Mammary epithelial cell (primary cell): ENCODE measurements at regions of chr5 and their contacts with region 1.

Region 1: GRCh38 chr5:55691265-55692105 is 20.6 kb downstream of the SLC38A9 start:
- DNase-seq: peak; percentile 31
- H3K4me3 ChIP-seq: no peak overlapping the region
- H3K27ac ChIP-seq: no peak overlapping the region
- H3K4me1 ChIP-seq: no peaks in the 10 kb centered on the region
- H3K27me3 ChIP-seq: no peaks in the 10 kb centered on the region
- CTCF ChIP-seq: peak; percentile 55 to 62

Region 2: GRCh38 chr5:55187370-55187769 is 504.1 kb before region 1 on chr5:
- CTCF ChIA-PET with region 1: no interaction called
- dilution Hi-C with region 1: no loop called
- in situ Hi-C with region 1: loop called (anchors 25 kb)
- intact Hi-C with region 1: loop called (anchors 5 kb)
- DNase-seq: peak; percentile 42
- H3K4me3 ChIP-seq: no peak overlapping the region
- H3K27ac ChIP-seq: no peak overlapping the region
- H3K4me1 ChIP-seq: no peaks in the 10 kb centered on the region
- H3K27me3 ChIP-seq: peaks cover 4% of the 10 kb centered on the region
- CTCF ChIP-seq: peak; percentile 42 to 53

Region 3: DNA sequence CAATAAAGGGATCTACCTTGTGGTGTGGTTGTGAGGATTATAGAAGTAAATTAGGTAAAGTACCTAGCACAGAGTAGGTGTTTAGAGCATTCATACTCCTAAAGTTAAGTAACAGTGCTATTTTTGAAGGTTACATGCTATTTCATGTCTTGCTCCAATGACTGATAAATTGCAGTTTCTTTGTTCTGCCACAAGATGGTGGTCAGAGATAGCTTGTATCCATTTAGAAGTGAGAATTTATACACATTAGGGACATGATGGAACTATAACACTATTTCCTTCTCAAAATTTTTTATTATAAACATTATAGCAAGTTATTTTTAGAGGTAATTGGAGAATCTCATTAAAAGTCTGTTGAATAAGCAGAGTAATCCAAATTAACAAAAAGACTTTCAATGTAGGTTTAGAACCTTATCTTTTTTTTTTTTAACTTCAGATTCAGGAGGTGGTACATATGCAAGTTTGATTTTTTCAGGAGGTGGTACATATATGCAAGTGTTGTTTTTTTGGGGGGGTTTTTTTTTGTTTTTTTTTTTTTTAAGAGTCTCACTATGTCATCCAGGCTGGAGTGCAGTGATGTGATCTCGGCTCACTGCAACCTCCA is 366.6 kb before region 1 on chr5:
- CTCF ChIA-PET with region 1: no interaction called
- dilution Hi-C with region 1: no loop called
- in situ Hi-C with region 1: no loop called
- intact Hi-C with region 1: loop called (anchors 5 kb)
- DNase-seq: peak; percentile 26
- H3K4me3 ChIP-seq: no peak overlapping the region
- H3K27ac ChIP-seq: no peak overlapping the region
- H3K4me1 ChIP-seq: no peaks in the 10 kb centered on the region
- H3K27me3 ChIP-seq: no peaks in the 10 kb centered on the region
- CTCF ChIP-seq: peak; percentile 56 to 66

Region 4: GRCh38 chr5:55407059-55407684 is 284.3 kb before region 1 on chr5:
- CTCF ChIA-PET with region 1: no interaction called
- dilution Hi-C with region 1: no loop called
- in situ Hi-C with region 1: loop called (anchors 25 kb)
- intact Hi-C with region 1: loop called (anchors 1 kb)
- DNase-seq: peak; percentile 23
- H3K4me3 ChIP-seq: no peak overlapping the region
- H3K27ac ChIP-seq: no peak overlapping the region
- H3K4me1 ChIP-seq: no peaks in the 10 kb centered on the region
- H3K27me3 ChIP-seq: no peaks in the 10 kb centered on the region
- CTCF ChIP-seq: peak; percentile 68 to 76

Region 5: DNA sequence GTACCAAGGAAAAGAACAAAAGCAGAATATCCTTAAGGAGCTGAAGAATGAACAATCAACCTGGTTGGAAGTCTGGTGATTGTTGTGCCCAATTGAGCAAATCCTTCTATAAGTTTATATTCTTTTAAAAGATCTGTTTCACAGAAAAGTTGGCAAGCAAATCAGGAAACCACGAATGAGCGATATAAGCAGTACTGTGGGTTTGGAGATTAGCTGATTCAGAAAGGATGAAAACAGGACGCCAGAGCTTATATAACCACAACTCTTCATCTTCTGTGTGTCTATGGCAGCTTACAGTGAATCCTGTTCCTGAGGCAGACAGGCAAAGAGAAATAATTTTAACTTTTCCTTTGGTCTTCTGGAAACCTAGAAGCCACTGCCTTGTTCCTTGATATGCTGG is 41.1 kb before region 1 on chr5:
- CTCF ChIA-PET with region 1: no interaction called
- dilution Hi-C with region 1: no loop called
- in situ Hi-C with region 1: no loop called
- intact Hi-C with region 1: no loop called
- DNase-seq: peak; percentile 42
- H3K4me3 ChIP-seq: no peak overlapping the region
- H3K27ac ChIP-seq: no peak overlapping the region
- H3K4me1 ChIP-seq: no peaks in the 10 kb centered on the region
- H3K27me3 ChIP-seq: no peaks in the 10 kb centered on the region
- CTCF ChIP-seq: no peak

Region 6: GRCh38 chr5:55923177-55923771 is 231.8 kb after region 1 on chr5:
- CTCF ChIA-PET with region 1: no interaction called
- dilution Hi-C with region 1: no loop called
- in situ Hi-C with region 1: no loop called
- intact Hi-C with region 1: loop called (anchors 2 kb)
- DNase-seq: no peak
- H3K4me3 ChIP-seq: no peak overlapping the region
- H3K27ac ChIP-seq: no peak overlapping the region
- H3K4me1 ChIP-seq: no peaks in the 10 kb centered on the region
- H3K27me3 ChIP-seq: no peaks in the 10 kb centered on the region
- CTCF ChIP-seq: no peak